ENCODE measurements at regions of chr17 and their contacts with region 1.

Region 1: DNA sequence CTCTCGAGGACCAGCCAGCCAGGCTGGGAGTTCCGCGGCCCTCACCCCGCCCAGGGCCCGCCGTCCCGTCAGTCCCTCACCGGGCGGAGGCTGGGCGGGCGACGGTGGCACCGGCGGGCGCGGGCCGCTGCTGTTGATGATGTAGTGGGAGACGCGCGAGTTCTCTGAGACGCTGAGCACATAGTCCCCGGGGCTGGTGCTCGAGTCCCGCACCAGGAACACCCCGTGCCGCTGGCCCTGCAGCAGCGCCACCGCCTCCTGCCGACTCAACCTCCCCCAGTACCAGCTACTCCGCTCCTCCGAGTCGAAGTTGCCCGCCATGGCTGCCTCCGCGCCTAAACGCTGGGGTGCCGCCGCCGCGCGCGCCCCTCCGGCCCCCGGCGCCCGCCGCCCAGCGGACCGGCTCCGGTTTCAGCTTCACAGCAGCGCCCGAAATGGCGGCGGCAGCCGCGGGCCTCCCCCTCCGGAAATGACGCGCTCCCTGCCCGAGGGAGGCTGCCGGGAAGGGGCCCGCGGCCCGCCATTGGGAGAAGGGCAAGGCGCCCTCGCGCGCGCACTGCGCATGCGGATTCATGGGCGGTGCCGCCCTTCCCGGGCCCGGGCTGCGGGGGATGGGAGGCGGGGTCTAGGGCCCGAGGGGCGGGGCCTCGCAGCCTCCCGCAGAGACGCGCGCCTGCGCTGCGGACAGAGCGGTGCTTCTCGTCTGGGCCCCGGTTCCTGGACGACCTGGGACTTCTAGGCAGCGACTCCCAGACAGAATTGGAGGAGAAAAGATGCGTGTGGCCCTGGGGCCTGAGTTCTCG is at the start of gene CRK:
- DNase-seq: peak; percentile 96 to 99 (median 98)
- H3K4me3 ChIP-seq: peak within 1 kb of the TSS; percentile 72
- H3K27ac ChIP-seq: peak within 1 kb of the TSS; percentile 84 to 93
- H3K4me1 ChIP-seq: peaks cover 9% of the 10 kb centered on the region
- H3K27me3 ChIP-seq: no peaks in the 10 kb centered on the region
- CTCF ChIP-seq: peak in 2 of 3 donors; percentile 24 to 28
- EP300 ChIP-seq: peak; percentile 63
- POLR2A ChIP-seq: peak; percentile 97
- total RNA-seq, gene CRK: 40.0 to 60.6 (median 48.8) TPM

Region 2: GRCh38 chr17:1365445-1366039 is 90.5 kb before region 1 on chr17:
- intact Hi-C with region 1: loop called in 2 of 4 experiments (anchors 5 to 10 kb)
- DNase-seq: peak in 4 of 5 donors; percentile 31 to 64 (median 46)
- H3K4me3 ChIP-seq: no peak overlapping the region
- H3K27ac ChIP-seq: no peak overlapping the region
- H3K4me1 ChIP-seq: peaks cover 18% of the 10 kb centered on the region
- H3K27me3 ChIP-seq: no peaks in the 10 kb centered on the region
- CTCF ChIP-seq: peak; percentile 61 to 87 (median 86)
- EP300 ChIP-seq: no peak
- POLR2A ChIP-seq: no peak

Region 3: DNA sequence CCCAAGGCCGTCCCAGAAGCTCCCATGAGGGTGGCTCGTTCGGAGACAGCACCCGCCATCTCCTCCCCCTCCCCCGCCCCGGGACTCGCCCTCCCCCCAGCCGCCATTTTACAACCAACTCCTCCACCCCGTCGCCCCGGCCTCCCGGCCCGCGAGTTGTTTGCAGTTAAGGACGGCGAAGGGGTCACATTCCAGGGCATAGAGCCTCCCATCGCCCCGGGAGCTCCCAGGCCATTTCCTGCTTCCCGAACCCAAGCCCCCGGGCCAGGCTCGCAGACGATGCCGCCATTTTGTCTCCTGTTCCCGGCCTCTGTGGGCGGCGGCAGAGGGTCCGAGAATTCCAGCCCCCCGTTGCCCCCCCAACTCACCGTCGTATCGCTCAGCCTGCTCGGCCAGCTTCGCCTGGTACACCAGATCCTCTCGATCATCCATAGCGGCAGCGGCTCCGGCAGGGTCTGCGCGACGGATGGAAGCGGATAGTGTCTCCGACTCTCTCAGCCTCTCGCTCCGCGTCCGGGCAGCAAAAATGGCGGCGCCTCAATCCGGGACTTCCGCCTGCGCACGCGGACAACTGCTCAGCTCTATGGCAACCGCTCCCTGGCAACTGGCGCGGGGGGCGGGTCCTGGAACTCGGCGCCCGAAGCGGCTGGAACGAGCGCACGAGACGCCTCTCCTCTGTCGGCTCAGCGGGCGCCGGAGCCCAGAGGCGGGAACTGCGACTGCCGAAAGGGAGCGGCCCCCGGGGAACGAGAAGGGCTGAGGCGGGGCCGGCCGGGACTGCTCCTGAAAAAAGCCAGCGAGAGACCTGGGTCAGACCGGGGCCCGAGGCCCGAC is 56.1 kb before region 1 on chr17 and contains the start of gene YWHAE:
- intact Hi-C with region 1: loop called in 1 of 4 experiments (anchors 10 kb)
- DNase-seq: peak; percentile 97 to 99 (median 98)
- H3K4me3 ChIP-seq: peak within 1 kb of the TSS; percentile 69
- H3K27ac ChIP-seq: peak within 1 kb of the TSS; percentile 93 to 95
- H3K4me1 ChIP-seq: peaks cover 15% of the 10 kb centered on the region
- H3K27me3 ChIP-seq: no peaks in the 10 kb centered on the region
- CTCF ChIP-seq: peak in 2 of 3 donors; percentile 7 to 34
- EP300 ChIP-seq: no peak
- POLR2A ChIP-seq: peak; percentile 99
- total RNA-seq, gene YWHAE: 384 to 524 (median 452) TPM

Region 4: GRCh38 chr17:1673041-1673785 is 217.2 kb after region 1 on chr17:
- intact Hi-C with region 1: no loop called
- DNase-seq: no peak
- H3K4me3 ChIP-seq: no peak overlapping the region
- H3K27ac ChIP-seq: no peak overlapping the region
- H3K4me1 ChIP-seq: no peaks in the 10 kb centered on the region
- H3K27me3 ChIP-seq: no peaks in the 10 kb centered on the region
- CTCF ChIP-seq: no peak
- EP300 ChIP-seq: no peak
- POLR2A ChIP-seq: no peak

Measured in ovary (tissue), 10 donors.